ENCODE measurements at regions of chr3 and their contacts with region 1.

Region 1: GRCh38 chr3:108914774-108915641 is 38.7 kb downstream of the GUCA1C start:
- DNase-seq: peak; percentile 75
- ATAC-seq: peak; percentile 97
- H3K4me3 Mint-ChIP-seq: peak overlapping the region; percentile 13
- H3K27ac Mint-ChIP-seq: peak overlapping the region; percentile 0
- H3K4me1 Mint-ChIP-seq: peaks cover 14% of the 10 kb centered on the region
- H3K27me3 Mint-ChIP-seq: peaks cover 6% of the 10 kb centered on the region

Region 2: GRCh38 chr3:108662130-108662738 is 252.8 kb before region 1 on chr3:
- CTCF ChIA-PET with region 1: interaction called, 69 read pairs
- POLR2A ChIA-PET with region 1: no interaction called
- intact Hi-C with region 1: loop called (anchors 1 kb)
- DNase-seq: peak; percentile 63
- ATAC-seq: peak; percentile 69
- H3K4me3 Mint-ChIP-seq: no peak overlapping the region
- H3K27ac Mint-ChIP-seq: peak overlapping the region; percentile 6
- H3K4me1 Mint-ChIP-seq: peaks cover 15% of the 10 kb centered on the region
- H3K27me3 Mint-ChIP-seq: no peaks in the 10 kb centered on the region

Region 3: DNA sequence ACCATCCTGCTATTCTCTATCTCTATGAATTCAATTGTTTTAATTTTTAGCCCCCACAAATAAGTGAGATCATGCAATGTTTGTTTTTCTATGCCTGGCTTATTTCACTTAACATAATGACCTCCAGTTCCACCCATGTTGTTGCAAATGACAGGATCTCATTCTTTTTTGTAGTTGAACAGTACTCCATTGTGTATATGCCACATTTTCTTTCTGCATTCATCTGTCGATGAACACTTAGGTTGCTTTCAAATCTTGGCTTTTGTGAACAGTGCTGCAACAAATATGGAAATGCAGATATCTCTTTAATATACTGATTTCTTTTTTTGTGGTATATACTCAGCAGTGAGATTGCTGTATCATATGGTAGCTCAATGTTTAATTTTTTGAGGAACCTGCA is 216.5 kb before region 1 on chr3:
- CTCF ChIA-PET with region 1: no interaction called
- POLR2A ChIA-PET with region 1: no interaction called
- intact Hi-C with region 1: no loop called
- DNase-seq: no peak
- ATAC-seq: no peak
- H3K4me3 Mint-ChIP-seq: no peak overlapping the region
- H3K27ac Mint-ChIP-seq: no peak overlapping the region
- H3K4me1 Mint-ChIP-seq: no peaks in the 10 kb centered on the region
- H3K27me3 Mint-ChIP-seq: no peaks in the 10 kb centered on the region

Region 4: DNA sequence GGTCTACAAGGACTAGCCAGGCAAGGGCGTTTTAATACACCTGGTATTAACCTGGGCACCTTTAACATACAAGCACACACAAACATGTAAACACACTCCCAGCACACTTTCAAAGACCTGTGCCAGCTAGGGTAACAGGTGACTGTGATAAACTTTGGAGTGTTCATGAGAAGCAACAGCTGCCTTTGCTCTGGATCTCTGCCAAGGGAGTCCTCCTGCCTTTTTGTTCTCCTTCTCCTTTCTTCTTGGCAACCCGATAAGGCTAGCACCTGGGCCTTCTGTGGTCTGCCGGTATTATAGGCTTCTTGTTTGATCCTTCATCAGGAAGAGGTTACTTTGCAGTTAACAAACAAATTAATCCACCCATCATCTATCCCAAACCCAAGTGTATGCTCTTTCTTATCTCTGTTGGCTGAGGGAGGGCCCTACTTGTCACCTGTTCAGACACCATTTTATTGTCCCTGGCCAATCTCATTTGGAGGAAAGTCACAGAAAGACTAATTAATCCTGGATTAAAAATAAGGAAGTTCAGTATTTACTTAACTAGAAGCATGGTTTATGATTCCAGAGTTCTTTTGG is 157.5 kb before region 1 on chr3 and contains the start of gene RETNLB:
- CTCF ChIA-PET with region 1: interaction called, 7 read pairs
- POLR2A ChIA-PET with region 1: no interaction called
- intact Hi-C with region 1: loop called in 1 of 2 experiments (anchors 5 kb)
- DNase-seq: no peak
- ATAC-seq: no peak
- H3K4me3 Mint-ChIP-seq: no peak within 1 kb of the TSS
- H3K27ac Mint-ChIP-seq: no peak within 1 kb of the TSS
- H3K4me1 Mint-ChIP-seq: peaks cover 4% of the 10 kb centered on the region
- H3K27me3 Mint-ChIP-seq: no peaks in the 10 kb centered on the region
- total RNA-seq, gene RETNLB: not detected

Region 5: GRCh38 chr3:108835101-108835500 is 79.9 kb before region 1 on chr3:
- CTCF ChIA-PET with region 1: interaction called, 7 read pairs
- POLR2A ChIA-PET with region 1: no interaction called
- intact Hi-C with region 1: loop called in 1 of 2 experiments (anchors 5 kb)
- DNase-seq: peak; percentile 63
- ATAC-seq: peak; percentile 67
- H3K4me3 Mint-ChIP-seq: peak overlapping the region; percentile 74
- H3K27ac Mint-ChIP-seq: peak overlapping the region; percentile 92
- H3K4me1 Mint-ChIP-seq: peaks cover 84% of the 10 kb centered on the region
- H3K27me3 Mint-ChIP-seq: no peaks in the 10 kb centered on the region

Region 6: DNA sequence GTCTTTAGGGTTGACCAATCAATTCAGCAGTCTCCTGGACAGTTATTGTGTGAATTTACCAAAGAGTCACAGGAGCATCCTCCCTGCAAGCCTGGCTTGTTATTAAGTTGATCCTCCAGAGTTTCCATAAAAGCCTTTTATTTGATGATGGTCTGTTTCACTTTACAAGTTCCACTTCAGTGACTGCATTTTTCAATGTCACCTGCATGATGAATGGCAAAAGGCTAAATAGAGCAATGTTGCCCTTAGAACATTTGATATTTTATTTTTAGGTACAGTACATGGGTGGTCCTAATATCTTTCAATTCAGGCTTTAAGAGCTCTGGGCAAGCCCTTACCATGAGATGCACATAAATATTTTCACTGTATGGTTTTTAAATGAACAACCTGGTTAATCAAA is 16.0 kb after region 1 on chr3:
- CTCF ChIA-PET with region 1: interaction called, 10 read pairs
- POLR2A ChIA-PET with region 1: no interaction called
- intact Hi-C with region 1: no loop called
- DNase-seq: no peak
- ATAC-seq: no peak
- H3K4me3 Mint-ChIP-seq: no peak overlapping the region
- H3K27ac Mint-ChIP-seq: no peak overlapping the region
- H3K4me1 Mint-ChIP-seq: no peaks in the 10 kb centered on the region
- H3K27me3 Mint-ChIP-seq: peaks cover 11% of the 10 kb centered on the region

Region 7: DNA sequence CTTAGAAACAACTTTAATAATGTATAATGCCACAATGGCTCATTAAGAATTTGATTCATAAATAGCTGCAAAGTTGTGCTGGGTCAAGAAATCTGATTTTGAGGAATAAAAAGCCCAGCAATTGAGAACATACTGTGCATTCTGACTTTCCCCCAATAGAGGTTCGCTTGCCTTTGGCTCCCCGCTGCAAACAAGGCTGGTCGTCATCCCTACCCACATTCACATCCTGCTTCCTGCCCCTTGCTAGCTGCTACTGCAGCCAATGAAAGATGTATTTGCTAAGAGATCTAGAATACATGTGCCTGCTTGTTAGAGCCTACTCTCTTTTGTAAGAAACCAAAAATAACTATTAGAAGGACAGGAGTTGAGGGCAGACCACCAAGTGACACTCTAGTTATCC is 90.4 kb after region 1 on chr3:
- CTCF ChIA-PET with region 1: no interaction called
- POLR2A ChIA-PET with region 1: no interaction called
- intact Hi-C with region 1: no loop called
- DNase-seq: no peak
- ATAC-seq: no peak
- H3K4me3 Mint-ChIP-seq: no peak overlapping the region
- H3K27ac Mint-ChIP-seq: no peak overlapping the region
- H3K4me1 Mint-ChIP-seq: no peaks in the 10 kb centered on the region
- H3K27me3 Mint-ChIP-seq: peaks cover 4% of the 10 kb centered on the region

Region 8: GRCh38 chr3:109336291-109336861 is 421.4 kb after region 1 on chr3:
- CTCF ChIA-PET with region 1: no interaction called
- POLR2A ChIA-PET with region 1: no interaction called
- intact Hi-C with region 1: no loop called
- DNase-seq: peak; percentile 56
- ATAC-seq: peak; percentile 78
- H3K4me3 Mint-ChIP-seq: peak overlapping the region; percentile 69
- H3K27ac Mint-ChIP-seq: no peak overlapping the region
- H3K4me1 Mint-ChIP-seq: peaks cover 13% of the 10 kb centered on the region
- H3K27me3 Mint-ChIP-seq: peaks cover 26% of the 10 kb centered on the region

Measured in activated CD4-positive, alpha-beta T cell treated with anti-CD3 and anti-CD28 coated beads for 36 hours (primary cell).